Prostate gland (tissue), 2 donors: ENCODE measurements at regions of chr10 and their contacts with region 1.

Region 1: GRCh38 chr10:35635576-35635975 is 6.5 kb downstream of the FZD8 start:
- DNase-seq: peak; percentile 41
- H3K4me3 ChIP-seq: no peak overlapping the region
- H3K27ac ChIP-seq: no peak overlapping the region
- H3K4me1 ChIP-seq: no peaks in the 10 kb centered on the region
- H3K27me3 ChIP-seq: no peaks in the 10 kb centered on the region
- CTCF ChIP-seq: peak; percentile 79 to 95 (median 88)
- POLR2A ChIP-seq: no peak

Region 2: DNA sequence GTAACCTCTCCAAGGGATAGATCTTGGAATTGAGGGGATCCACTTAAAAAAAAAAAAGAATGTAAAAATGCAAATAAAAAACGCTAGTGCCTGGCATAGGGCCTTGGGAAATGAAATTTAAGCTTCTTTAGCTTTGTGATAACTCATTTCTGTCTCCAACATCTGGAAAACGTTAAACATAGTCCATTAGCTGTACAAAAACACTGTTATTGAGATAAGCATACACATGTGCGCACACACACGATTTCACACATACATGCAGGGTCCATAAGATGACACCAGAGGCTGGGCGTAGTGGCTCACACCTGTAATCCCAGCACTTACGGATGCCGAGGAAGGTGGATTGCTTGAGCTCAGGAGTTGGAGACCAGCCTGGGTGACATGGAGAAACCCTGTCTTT is 531.7 kb before region 1 on chr10:
- intact Hi-C with region 1: no loop called
- DNase-seq: no peak
- H3K4me3 ChIP-seq: no peak overlapping the region
- H3K27ac ChIP-seq: no peak overlapping the region
- H3K4me1 ChIP-seq: no peaks in the 10 kb centered on the region
- H3K27me3 ChIP-seq: no peaks in the 10 kb centered on the region
- CTCF ChIP-seq: no peak
- POLR2A ChIP-seq: no peak

Region 3: GRCh38 chr10:35574924-35575352 is 60.6 kb before region 1 on chr10:
- intact Hi-C with region 1: no loop called
- DNase-seq: no peak
- H3K4me3 ChIP-seq: no peak overlapping the region
- H3K27ac ChIP-seq: no peak overlapping the region
- H3K4me1 ChIP-seq: no peaks in the 10 kb centered on the region
- H3K27me3 ChIP-seq: no peaks in the 10 kb centered on the region
- CTCF ChIP-seq: no peak
- POLR2A ChIP-seq: no peak

Region 4: DNA sequence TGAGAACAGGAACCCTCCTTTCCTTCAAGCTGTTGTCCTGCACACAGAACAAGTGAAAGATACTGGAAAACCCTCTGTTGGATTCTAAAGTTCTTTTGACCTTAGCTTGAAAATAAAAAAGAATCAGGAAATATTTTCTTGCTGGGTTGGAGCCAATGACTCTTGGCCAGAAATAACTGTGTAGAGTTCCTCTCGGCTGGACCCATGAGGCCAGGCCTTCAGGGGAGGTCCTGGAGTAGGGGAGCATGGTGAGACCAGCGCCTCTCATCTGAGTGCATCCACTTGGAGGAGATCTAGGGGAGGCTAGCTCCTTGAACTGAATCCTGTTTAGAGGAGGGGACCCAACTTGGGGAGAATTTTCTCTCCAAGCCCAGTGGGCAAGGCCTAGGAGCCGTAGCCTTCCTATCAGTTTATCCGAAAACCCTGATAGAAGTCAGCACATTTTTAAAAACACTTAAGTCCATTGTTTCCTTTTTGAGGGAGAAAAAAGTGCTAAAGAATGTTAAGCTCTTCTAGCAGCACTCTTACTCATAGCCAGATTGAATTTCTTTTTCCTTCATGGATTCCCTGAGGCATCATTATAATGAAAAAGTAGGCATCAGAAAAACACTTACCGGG is 854.1 kb after region 1 on chr10:
- intact Hi-C with region 1: no loop called
- DNase-seq: no peak
- H3K4me3 ChIP-seq: no peak overlapping the region
- H3K27ac ChIP-seq: no peak overlapping the region
- H3K4me1 ChIP-seq: no peaks in the 10 kb centered on the region
- H3K27me3 ChIP-seq: no peaks in the 10 kb centered on the region
- CTCF ChIP-seq: no peak
- POLR2A ChIP-seq: no peak

Region 5: DNA sequence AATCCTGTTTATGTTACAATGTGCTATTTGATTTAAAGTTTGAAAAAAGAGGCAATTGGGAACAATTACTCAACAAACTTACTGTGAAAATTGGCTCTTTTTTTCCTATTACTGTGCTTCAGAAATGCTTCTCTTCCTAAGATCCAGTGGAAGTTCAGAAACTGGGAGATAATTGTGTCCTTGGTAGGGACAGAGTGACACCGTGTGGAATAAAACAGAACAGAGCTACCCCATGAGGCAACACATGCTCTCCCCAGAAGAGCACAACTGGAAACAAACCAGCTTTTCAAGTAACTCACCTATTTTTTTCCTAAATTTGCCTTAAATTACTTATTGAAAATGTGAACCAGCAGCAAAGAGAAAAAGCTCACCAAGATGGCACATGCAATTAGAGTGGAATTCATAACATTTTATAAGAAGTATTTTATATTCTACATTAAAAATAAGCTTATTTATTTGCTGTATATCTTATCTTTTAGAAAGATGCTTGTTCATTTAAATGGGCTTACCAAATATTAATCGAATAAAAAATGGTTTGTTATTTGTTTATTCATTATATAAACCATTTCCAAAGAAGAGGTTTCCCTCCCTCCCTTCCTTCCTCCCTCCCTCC is 1143.8 kb after region 1 on chr10:
- intact Hi-C with region 1: loop called (anchors 2 kb)
- DNase-seq: no peak
- H3K4me3 ChIP-seq: no peak overlapping the region
- H3K27ac ChIP-seq: no peak overlapping the region
- H3K4me1 ChIP-seq: no peaks in the 10 kb centered on the region
- H3K27me3 ChIP-seq: no peaks in the 10 kb centered on the region
- CTCF ChIP-seq: peak in 3 of 4 experiments; percentile 27 to 55 (median 51)
- POLR2A ChIP-seq: no peak

Region 6: GRCh38 chr10:36880898-36881297 is 1245.3 kb after region 1 on chr10:
- intact Hi-C with region 1: loop called (anchors 5 kb)
- DNase-seq: no peak
- H3K4me3 ChIP-seq: no peak overlapping the region
- H3K27ac ChIP-seq: no peak overlapping the region
- H3K4me1 ChIP-seq: no peaks in the 10 kb centered on the region
- H3K27me3 ChIP-seq: no peaks in the 10 kb centered on the region
- CTCF ChIP-seq: peak in 2 of 4 experiments; percentile 21 to 35
- POLR2A ChIP-seq: no peak